ENCODE measurements at regions of chr13 and their contacts with region 1.

Region 1: DNA sequence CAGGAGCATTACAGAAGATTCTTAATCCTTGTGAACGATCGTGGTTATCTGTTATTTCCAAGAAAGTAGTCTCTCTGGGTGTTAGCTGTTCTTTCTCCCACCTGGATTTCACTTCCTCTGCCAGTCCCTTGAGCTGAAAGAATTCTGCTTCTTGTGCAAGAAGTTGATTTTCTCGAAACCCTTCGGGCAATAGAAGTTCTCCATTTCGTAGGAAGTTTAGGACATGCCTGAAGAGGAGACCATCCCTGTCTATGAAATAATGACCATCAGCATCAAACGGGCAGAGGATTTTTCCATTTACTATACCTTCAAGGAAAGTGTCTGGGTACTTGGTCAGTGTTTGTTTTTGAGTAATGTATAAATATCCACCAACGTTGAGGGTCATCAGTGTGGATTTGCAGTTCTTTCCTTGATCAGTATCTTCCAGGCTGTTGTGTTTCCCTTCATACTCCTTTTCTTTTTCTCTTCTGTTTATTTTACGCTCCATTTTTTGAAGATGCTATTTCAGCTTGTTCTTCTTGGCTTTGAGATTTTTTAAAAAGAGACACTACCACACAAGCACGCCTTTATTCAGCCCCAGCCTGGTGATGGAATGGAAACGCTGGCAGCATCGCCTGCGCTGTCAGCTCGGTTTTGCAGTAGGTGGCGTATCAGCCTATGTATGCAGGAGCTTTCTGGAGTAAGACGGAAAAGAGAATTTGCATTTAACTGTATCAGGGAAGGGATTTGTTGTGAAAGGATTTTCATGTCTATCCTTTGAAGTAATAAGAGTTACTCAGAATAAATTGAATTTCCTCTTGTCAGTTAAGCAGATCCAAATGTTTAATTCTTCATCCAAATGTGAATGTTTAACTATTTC is 6.5 kb downstream of the KCTD4 start:
- DNase-seq: peak; percentile 66 to 97 (median 78)

Region 2: GRCh38 chr13:45047394-45048310 is 146.7 kb before region 1 on chr13:
- intact Hi-C with region 1: loop called (anchors 1 kb)
- DNase-seq: peak; percentile 66 to 97 (median 82)

Region 3: DNA sequence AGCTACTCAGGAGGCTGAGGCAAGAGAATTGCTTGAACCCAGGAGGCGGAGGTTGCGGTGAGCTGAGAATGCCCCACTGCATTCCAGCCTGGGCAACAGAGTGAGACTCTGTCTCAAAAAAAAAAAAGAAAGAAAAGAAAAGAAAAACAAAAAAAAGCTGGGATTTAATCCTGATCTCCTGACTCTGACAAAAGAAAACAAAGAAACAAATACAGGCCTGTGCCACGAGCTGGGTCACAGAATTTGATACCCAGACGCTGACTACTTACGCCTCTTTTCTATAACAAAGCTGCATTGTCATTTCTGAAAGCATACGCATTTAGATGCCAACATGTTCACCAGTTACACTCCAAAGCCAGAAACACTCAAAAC is 92.2 kb before region 1 on chr13:
- intact Hi-C with region 1: loop called (anchors 5 kb)
- DNase-seq: peak in 4 of 10 donors; percentile 22 to 86 (median 41)

Region 4: DNA sequence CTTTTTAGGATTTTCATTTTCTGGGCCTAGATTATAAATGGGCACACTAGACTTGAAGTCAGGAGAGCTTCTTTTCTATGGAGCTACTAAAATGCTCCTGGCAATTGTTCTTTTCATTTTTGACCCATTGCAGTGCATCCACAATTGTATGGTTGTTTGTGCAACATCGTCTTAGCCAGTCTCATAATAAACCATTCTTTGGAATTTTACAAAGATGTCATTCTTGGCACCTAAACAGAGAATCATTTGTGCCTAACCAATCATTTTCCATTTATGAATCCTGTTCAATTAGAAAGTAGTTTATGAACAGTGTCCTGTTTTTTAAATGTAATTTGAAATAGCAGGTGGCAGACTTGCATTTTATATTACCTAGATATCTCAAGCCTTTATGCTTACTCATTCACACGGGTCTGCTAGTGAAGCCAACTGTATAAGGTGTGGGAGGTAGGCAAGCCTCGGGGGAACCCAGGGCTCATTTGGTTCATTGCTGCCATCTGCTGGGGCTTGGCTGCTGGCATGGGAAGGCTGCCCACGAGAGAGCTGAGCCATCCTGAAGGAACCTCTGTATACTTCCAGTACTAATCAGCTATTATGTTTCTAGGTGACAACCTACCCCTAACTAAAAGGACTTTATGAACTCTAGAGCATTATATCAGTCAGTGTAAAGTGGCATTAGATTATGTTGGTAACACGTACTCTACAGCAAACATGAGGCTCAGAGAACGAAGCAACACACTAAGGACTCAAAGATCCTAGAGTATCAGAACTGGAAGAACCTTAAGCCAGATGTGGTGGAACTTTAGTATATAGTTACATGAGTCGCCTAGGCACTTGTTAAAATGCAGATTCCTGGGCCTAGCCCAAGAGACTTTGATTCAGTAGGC is 86.7 kb after region 1 on chr13:
- intact Hi-C with region 1: loop called (anchors 2 kb)
- DNase-seq: peak; percentile 70 to 98 (median 88)

Region 5: GRCh38 chr13:45310341-45311125 is 116.2 kb after region 1 on chr13:
- intact Hi-C with region 1: loop called (anchors 2 kb)
- DNase-seq: no peak

Measured in posterior cingulate gyrus (tissue), 11 donors.